Head of caudate nucleus (tissue), 42 donors: ENCODE measurements at regions of chr3 and their contacts with region 1.

Region 1: GRCh38 chr3:72447059-72447946 is 400.9 kb downstream of the SHQ1 start:
- DNase-seq: peak; percentile 62 to 97 (median 92)

Region 2: GRCh38 chr3:72177083-72178050 is 269.9 kb before region 1 on chr3:
- intact Hi-C with region 1: loop called (anchors 10 kb)
- DNase-seq: peak in 25 of 42 donors; percentile 24 to 74 (median 49)

Region 3: GRCh38 chr3:72288955-72289691 is 158.2 kb before region 1 on chr3:
- intact Hi-C with region 1: loop called (anchors 10 kb)
- DNase-seq: peak; percentile 64 to 92 (median 82)

Region 4: DNA sequence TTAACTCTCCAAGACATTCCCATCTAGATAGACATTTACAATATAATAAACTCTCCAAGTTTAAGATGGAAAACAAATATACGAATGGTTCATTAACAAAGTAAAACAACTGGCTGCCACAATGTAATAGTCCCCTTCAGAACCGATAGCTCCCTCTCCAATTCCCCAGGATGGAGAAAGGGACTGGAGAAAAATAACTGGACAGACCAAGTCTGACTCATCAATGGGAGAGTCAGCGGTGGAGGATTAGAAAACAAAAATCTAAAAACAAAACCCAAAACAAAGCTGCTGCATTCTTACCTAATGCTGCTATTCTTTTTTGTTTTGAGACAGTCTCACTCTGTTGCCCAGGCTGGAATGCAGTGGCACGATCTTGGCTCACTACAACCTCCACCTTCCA is 67.1 kb before region 1 on chr3:
- intact Hi-C with region 1: loop called (anchors 2 kb)
- DNase-seq: peak in 12 of 42 donors; percentile 18 to 71 (median 32)

Region 5: DNA sequence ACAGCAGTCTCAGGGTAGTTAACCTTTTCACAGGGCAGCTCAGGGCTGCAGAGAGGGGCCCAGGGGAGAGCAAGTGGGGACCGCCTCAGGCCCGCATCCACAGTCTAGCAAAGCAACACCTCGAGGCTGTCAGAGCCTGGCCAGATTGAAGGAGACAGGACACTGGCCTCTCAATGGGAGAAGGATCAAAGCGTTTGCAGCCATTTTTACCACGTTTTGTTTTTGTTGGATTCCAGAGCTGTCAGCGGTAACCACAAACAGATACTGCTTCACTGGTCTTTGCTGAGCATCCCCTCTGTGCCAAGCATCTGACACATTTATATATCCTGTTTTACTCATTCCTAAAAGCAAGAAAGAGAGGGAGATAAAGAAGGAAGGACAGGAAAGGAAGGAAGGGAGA is 247.1 kb after region 1 on chr3:
- intact Hi-C with region 1: no loop called
- DNase-seq: peak in 1 of 42 donors; percentile 12

Region 6: DNA sequence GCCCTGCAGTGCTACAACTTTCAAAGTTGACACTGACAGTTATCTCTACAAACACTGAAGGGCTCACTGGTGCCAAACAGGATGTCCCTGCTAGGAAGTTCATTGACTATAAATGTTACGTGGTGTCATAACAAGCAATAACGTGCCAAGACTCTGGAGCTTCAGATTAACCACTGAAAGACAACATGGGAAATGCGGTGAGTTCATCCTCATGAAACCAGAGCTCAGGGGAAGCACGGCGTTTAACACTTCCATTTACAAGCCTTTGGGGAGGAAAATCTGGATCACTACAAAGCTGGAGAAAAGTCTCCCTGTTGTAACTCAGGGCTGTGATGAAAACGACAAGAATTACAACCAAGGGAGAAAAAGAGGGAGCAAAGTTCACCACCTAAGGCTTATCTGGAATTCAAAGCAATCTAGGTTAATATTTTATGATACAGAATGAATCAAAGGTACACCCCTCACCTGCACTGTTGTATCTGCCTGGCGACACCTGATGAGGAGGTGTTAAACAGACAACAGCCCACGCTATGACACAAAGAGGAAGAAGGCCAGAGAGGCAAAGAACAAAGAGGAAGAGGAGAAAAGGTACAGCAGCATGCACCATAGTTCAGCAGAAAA is 374.0 kb after region 1 on chr3:
- intact Hi-C with region 1: loop called (anchors 5 kb)
- DNase-seq: no peak